ENCODE measurements at regions of chr5 and their contacts with region 1.

Region 1: DNA sequence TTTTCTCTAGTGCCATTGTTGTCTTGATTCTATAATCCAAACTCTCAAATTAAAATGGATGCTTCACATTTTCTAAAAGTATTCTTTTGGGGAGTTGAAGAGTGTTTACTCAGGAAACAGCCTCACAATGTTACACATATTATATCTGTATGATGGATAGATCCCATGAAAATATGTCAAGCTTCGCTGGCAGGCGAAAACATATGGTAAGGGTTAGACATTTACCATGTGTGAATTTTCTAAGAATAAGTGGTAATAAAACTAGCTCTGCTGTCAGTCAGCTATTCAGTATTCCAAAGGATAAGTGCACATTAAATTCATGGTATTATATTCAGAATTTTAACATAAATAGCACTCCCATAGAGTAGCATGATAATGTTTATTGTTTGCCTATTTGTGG is 13.3 kb upstream of the ADCY2 start:
- DNase-seq: no peak
- ATAC-seq: no peak
- H3K4me3 ChIP-seq: no peak overlapping the region
- H3K27ac ChIP-seq: no peak overlapping the region
- H3K4me1 ChIP-seq: no peaks in the 10 kb centered on the region
- H3K27me3 ChIP-seq: no peaks in the 10 kb centered on the region
- CTCF ChIP-seq: no peak
- POLR2A ChIP-seq: no peak

Region 2: DNA sequence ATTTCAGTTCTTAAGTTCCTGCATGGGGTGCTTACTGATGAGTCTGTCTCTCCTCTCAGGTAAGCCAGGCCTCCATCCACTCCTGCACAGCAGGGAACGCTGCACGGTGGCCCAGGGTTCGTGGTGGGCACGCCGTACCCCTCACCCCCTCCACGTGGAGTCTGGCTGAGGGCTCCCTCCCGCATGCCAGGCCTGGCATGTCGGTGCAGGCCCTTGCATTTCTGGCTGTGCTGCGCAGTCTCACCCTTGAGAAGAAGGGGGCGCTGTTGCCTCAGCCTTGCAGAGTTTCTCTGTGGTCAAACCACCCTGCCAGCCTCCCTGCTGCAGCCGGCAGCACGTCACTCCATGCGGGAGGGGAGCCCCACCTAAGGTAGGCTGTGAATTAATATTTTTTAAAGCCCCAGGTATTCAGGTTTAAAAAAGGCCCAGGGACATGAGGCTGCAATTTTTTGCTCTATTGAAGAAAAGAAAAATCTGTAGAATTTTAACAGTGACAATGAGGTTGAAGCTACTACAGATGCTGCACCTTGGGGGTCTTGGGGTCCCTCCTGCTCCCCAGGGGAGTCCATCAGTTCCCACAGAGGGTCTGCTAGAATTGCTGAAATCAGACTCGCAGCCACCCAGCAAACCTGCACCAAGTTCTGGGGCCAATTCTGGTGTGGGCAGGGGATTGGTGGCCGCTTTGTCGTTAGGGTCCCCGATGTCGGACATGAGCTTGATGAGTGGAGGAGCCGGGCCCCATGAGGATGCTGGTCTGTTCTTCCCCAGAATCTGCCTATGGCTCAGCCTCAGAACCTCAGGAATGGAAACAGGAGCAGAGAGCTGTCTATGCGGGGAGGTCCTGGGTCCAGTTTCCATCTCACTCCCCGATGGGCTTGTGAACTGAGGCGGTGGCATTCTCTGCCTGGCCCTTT is 616.7 kb before region 1 on chr5:
- in situ Hi-C with region 1: loop called in 1 of 4 experiments (anchors 10 kb)
- intact Hi-C with region 1: no loop called
- DNase-seq: peak; percentile 43 to 65
- ATAC-seq: peak; percentile 47 to 68
- H3K4me3 ChIP-seq: no peak overlapping the region
- H3K27ac ChIP-seq: peak overlapping the region; percentile 58 to 81 (median 80)
- H3K4me1 ChIP-seq: peaks cover 16 to 25% of the 10 kb centered on the region in 2 donors
- H3K27me3 ChIP-seq: no peaks in the 10 kb centered on the region
- CTCF ChIP-seq: peak; percentile 58 to 81 (median 79)
- POLR2A ChIP-seq: no peak